Activated CD8-positive, alpha-beta T cell treated with anti-CD3 and anti-CD28 coated beads for 36 hours (primary cell): ENCODE measurements at regions of chr10 and their contacts with region 1.

Region 1: GRCh38 chr10:29517352-29517923 is 117.3 kb downstream of the SVIL start:
- DNase-seq: peak; percentile 37
- ATAC-seq: peak; percentile 39
- H3K4me3 Mint-ChIP-seq: no peak overlapping the region
- H3K27ac Mint-ChIP-seq: no peak overlapping the region
- H3K4me1 Mint-ChIP-seq: peaks cover under 1% of the 10 kb centered on the region
- H3K27me3 Mint-ChIP-seq: no peaks in the 10 kb centered on the region
- CTCF ChIP-seq: peak; percentile 46

Region 2: GRCh38 chr10:29501692-29502091 is 15.7 kb before region 1 on chr10:
- CTCF ChIA-PET with region 1: interaction called, 16 read pairs
- POLR2A ChIA-PET with region 1: no interaction called
- intact Hi-C with region 1: no loop called
- DNase-seq: no peak
- ATAC-seq: no peak
- H3K4me3 Mint-ChIP-seq: no peak overlapping the region
- H3K27ac Mint-ChIP-seq: no peak overlapping the region
- H3K4me1 Mint-ChIP-seq: no peaks in the 10 kb centered on the region
- H3K27me3 Mint-ChIP-seq: no peaks in the 10 kb centered on the region
- CTCF ChIP-seq: no peak

Region 3: GRCh38 chr10:29588629-29589421 is 71.4 kb after region 1 on chr10:
- CTCF ChIA-PET with region 1: interaction called, 16 read pairs
- POLR2A ChIA-PET with region 1: no interaction called
- intact Hi-C with region 1: no loop called
- DNase-seq: no peak
- ATAC-seq: no peak
- H3K4me3 Mint-ChIP-seq: no peak overlapping the region
- H3K27ac Mint-ChIP-seq: no peak overlapping the region
- H3K4me1 Mint-ChIP-seq: peaks cover 10% of the 10 kb centered on the region
- H3K27me3 Mint-ChIP-seq: no peaks in the 10 kb centered on the region
- CTCF ChIP-seq: no peak

Region 4: DNA sequence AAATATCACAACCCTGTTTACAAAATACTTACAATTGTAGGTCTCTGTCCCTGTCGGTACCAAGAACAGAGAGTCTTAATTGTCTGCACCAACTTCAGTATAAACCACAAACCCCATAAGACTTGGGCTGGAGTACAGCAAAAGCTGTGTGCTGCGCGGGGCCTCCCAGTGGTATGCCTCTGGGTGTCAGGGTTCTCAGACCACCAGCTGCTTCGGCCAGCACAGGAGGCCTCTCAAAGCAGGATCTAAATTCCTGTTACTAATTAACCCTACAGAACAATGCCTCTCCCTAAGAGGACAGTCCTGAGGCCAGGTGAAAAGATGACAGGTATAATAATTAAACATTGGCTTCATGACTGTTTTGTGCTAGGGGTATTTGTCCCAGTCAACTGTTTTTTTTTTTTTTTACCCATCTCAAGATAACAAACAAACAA is 118.3 kb after region 1 on chr10:
- CTCF ChIA-PET with region 1: no interaction called
- POLR2A ChIA-PET with region 1: no interaction called
- intact Hi-C with region 1: no loop called
- DNase-seq: peak; percentile 24
- ATAC-seq: no peak
- H3K4me3 Mint-ChIP-seq: no peak overlapping the region
- H3K27ac Mint-ChIP-seq: peak overlapping the region; percentile 41
- H3K4me1 Mint-ChIP-seq: peaks cover 43% of the 10 kb centered on the region
- H3K27me3 Mint-ChIP-seq: no peaks in the 10 kb centered on the region
- CTCF ChIP-seq: no peak